K562 (cell line): ENCODE measurements at regions of chr19 and their contacts with region 1.

Region 1: DNA sequence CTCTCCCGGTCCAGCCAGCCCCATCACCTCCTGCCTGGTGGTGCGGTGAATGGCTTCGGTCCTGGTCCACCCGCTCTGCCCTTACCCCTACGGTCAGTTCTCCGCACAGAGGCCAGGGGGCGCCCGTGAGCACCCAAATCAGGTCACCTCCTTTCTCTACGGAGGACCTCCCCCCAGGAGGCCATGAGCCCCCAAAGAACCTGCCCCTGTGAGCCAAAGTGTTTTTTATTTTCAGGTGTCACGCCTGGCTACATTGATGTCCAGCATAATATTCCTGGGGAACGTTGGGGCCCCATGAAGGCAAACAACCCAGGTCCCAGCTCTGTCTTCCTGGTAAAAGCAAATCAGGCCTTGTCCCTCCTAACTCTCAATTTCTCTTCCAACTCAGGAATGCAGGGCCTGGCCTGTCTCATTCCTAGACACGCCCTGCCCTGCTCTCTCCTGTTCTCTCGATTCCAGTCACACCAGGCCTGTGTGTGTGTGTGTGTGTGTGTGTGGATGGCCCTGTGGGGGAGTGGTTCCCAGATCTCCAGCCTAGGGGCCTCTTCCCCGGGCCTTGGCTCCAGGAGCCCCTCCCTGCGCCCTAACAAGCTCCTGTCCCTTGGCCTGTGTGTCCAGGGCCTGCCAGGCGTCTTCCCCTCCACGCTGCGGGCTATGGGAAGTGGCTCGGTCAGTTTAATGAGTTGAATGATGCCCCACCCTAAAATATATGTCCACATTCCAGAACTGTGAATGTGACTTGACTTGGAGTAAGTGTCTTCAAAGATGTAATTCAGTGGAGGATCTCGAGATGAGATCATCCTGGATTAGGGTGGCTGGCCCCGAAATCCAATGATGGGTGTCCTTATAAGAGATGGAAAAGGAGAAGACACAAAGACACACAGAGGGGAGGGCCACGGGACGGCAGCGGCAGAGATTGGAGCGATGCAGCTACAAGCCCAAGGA is 9.8 kb upstream of the GIPC1 start:
- DNase-seq: peak; percentile 80 to 87 (median 84)
- ATAC-seq: peak; percentile 91
- H3K4me3 ChIP-seq: no peak overlapping the region
- H3K27ac ChIP-seq: no peak overlapping the region; the same call in 2 of the 3 replicates
- H3K4me1 ChIP-seq: peaks cover 23 to 27% of the 10 kb centered on the region in 2 experiments
- H3K27me3 ChIP-seq: no peaks in the 10 kb centered on the region
- CTCF ChIP-seq: peak; percentile 83 to 93 (median 84)
- EP300 ChIP-seq: no peak
- POLR2A ChIP-seq: no peak
- RAD21 ChIP-seq: peak in 1 of 2 experiments; percentile 66; a peak in 2 of 4 replicates

Region 2: DNA sequence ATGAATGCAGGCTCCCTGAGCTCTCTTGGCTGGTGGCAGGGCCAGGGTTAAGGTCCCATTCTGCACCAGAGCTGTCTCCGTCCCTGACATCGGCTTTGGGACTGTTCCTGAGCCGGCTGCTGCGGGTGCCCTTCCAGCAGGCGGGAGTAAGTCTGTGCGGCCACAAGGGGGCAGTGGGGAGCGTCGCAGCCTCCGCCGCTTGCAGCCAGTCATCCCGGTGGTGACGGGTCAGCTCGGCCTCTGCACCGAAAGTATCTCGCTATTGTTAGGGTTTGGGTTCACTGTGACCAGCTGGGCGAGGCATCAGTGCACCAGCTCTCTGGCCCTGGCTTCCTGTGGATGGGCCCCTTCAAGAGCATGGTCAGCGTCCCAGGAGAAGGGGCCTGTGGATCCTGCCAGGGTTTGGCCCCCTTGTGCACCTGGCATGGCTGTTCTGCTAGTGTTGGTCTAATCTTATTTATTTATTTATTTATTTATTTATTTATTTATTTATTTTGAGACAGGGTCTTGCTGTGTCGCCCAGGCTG is 51.0 kb after region 1 on chr19:
- CTCF ChIA-PET with region 1: interaction called, 6 read pairs
- POLR2A ChIA-PET with region 1: interaction called, 4 read pairs
- in situ Hi-C with region 1: no loop called
- intact Hi-C with region 1: loop called (anchors 1 kb)
- DNase-seq: peak; percentile 81 to 88 (median 82)
- ATAC-seq: peak; percentile 94
- H3K4me3 ChIP-seq: no peak overlapping the region
- H3K27ac ChIP-seq: peak overlapping the region; percentile 43; the same call in 1 of the 3 replicates
- H3K4me1 ChIP-seq: peaks cover 12 to 74% of the 10 kb centered on the region in 2 experiments; a peak in 4 of 5 replicates
- H3K27me3 ChIP-seq: no peaks in the 10 kb centered on the region
- CTCF ChIP-seq: peak; percentile 90 to 97 (median 96)
- EP300 ChIP-seq: no peak
- POLR2A ChIP-seq: no peak
- RAD21 ChIP-seq: peak; percentile 36 to 74; a peak in 3 of 4 replicates